ENCODE measurements at regions of chr10 and their contacts with region 1.

Region 1: GRCh38 chr10:132011024-132011423 is 29.3 kb upstream of the BNIP3 start:
- DNase-seq: no peak
- ATAC-seq: peak; percentile 35

Region 2: DNA sequence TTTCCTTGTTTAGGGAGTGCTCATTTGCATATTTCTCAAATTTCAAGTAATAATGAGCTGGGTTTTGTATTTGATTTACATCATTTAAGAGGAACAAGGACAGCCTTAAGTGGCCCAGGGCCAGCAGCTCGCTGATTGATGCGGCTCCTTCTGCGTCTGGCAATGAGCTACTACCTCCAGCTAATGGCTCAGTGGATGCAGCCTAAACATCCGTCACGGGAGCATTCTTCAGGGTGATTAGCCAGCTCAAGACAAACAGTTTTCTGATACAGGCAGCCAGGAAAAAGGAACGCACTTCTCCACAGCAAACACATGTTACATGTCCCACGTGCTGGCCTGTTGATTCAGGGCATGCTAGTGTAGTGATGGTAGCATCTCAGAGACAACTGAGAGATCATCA is 530.2 kb before region 1 on chr10:
- intact Hi-C with region 1: no loop called
- DNase-seq: no peak
- ATAC-seq: no peak

Region 3: DNA sequence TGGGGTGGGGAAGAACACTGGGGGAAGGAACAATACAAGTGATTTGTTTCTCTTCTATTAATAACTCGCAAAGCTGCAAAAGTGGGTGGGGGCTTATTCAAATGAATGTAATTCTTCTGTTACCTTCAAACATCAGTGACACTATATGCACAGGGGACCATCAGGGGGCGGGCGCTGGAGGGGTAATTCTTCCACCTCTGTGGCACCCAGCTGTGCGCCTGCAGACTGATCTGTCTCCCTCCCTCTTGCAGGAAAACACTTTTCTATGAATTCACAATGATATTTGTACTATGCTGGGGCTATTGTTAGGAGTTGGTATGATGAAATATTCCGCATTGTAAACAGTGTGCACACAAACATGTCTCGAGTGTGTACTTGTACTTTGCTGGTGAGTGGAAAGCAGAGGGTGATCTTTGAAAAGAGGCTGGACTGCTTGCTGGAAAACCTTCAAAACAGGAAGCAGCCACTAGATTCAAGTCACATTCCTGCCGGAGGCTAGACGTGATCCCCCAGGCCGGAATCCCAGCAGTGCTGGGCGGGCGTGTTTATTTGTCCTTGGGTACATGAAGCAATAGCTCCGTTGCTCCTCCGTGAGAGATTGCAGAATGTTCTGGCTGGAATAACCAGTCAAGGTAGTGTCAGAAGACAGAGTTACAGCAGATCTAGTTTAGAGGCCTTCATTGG is 13.5 kb before region 1 on chr10:
- intact Hi-C with region 1: loop called (anchors 2 kb)
- DNase-seq: no peak
- ATAC-seq: peak; percentile 71

Region 4: GRCh38 chr10:132054564-132054963 is 43.5 kb after region 1 on chr10:
- intact Hi-C with region 1: no loop called
- DNase-seq: no peak
- ATAC-seq: no peak